HAP-1 (cell line): ENCODE measurements at regions of chr9 and their contacts with region 1.

Region 1: GRCh38 chr9:23145467-23145866 is 680.6 kb downstream of the ELAVL2 start:
- DNase-seq: no peak
- H3K4me3 ChIP-seq: no peak overlapping the region
- H3K4me1 ChIP-seq: no peaks in the 10 kb centered on the region
- H3K27me3 ChIP-seq: no peaks in the 10 kb centered on the region

Region 2: DNA sequence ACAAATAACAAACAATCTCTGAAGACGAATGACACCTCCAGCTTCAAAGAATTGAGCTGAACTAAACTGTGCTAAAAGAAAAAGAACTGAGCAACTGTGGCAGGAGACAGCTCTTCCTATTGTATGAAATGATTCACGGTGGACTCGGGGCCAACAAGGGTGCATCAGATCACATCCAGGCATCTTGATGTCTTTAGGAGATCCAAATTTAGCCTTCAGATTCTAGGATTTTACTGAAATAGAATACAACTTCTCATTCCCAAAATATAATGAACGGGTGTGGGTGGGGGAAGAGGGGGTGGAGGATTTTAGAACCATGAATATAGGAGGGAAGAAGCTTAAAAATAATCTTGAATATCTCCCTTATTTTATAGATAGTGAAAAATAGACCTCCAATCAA is 48.8 kb after region 1 on chr9:
- in situ Hi-C with region 1: no loop called
- DNase-seq: no peak
- H3K4me3 ChIP-seq: no peak overlapping the region
- H3K4me1 ChIP-seq: no peaks in the 10 kb centered on the region
- H3K27me3 ChIP-seq: no peaks in the 10 kb centered on the region

Region 3: GRCh38 chr9:23278561-23278960 is 133.1 kb after region 1 on chr9:
- in situ Hi-C with region 1: no loop called
- DNase-seq: no peak
- H3K4me3 ChIP-seq: no peak overlapping the region
- H3K4me1 ChIP-seq: no peaks in the 10 kb centered on the region
- H3K27me3 ChIP-seq: no peaks in the 10 kb centered on the region

Region 4: GRCh38 chr9:23492126-23493002 is 346.9 kb after region 1 on chr9:
- in situ Hi-C with region 1: loop called (anchors 25 kb)
- DNase-seq: peak; percentile 36 to 65
- H3K4me3 ChIP-seq: no peak overlapping the region
- H3K4me1 ChIP-seq: no peaks in the 10 kb centered on the region
- H3K27me3 ChIP-seq: no peaks in the 10 kb centered on the region

Region 5: GRCh38 chr9:23887781-23888180 is 742.3 kb after region 1 on chr9:
- in situ Hi-C with region 1: no loop called
- DNase-seq: peak; percentile 51 to 82
- H3K4me3 ChIP-seq: no peak overlapping the region
- H3K4me1 ChIP-seq: peaks cover 6% of the 10 kb centered on the region
- H3K27me3 ChIP-seq: no peaks in the 10 kb centered on the region